Activated CD8-positive, alpha-beta memory T cell treated with anti-CD3 and anti-CD28 coated beads, Interleukin-2, amount 10 ng/mL, durations not matched to agents 7 days and 5 days (primary cell): ENCODE measurements at regions of chr10 and their contacts with region 1.

Region 1: DNA sequence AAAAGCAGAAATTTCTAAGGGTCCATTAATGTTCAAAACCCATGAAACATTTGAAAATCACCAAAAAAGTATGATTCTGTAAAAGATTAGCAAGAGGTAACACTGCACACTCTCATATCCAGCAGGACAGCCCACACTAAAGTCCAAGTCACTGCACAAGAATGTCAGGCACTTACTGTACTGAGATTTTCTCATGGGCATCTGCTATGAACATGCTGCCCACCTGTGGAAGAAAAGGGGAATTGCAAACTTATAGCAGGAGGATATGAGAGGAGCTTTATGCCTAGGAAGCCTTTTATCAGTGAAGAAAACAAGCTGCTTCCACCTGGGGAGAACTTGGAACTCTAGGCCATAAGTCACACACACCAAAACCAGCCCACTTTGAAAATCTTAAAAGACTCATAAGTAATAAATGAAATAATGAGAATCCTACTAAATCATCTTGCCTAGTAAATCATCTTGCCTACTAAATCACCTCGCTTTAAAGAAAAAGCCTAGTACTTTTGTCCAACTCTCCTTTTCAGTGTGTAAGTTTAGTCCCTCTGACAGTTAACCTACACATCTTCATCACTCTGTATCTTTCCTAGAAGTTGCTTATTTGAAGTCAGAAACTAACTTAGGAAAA is 46.1 kb downstream of the ARMH3 start:
- DNase-seq: peak; percentile 59
- ATAC-seq: peak; percentile 89
- H3K4me3 Mint-ChIP-seq: no peak overlapping the region
- H3K27ac Mint-ChIP-seq: no peak overlapping the region
- H3K4me1 Mint-ChIP-seq: no peaks in the 10 kb centered on the region
- H3K27me3 Mint-ChIP-seq: no peaks in the 10 kb centered on the region

Region 2: DNA sequence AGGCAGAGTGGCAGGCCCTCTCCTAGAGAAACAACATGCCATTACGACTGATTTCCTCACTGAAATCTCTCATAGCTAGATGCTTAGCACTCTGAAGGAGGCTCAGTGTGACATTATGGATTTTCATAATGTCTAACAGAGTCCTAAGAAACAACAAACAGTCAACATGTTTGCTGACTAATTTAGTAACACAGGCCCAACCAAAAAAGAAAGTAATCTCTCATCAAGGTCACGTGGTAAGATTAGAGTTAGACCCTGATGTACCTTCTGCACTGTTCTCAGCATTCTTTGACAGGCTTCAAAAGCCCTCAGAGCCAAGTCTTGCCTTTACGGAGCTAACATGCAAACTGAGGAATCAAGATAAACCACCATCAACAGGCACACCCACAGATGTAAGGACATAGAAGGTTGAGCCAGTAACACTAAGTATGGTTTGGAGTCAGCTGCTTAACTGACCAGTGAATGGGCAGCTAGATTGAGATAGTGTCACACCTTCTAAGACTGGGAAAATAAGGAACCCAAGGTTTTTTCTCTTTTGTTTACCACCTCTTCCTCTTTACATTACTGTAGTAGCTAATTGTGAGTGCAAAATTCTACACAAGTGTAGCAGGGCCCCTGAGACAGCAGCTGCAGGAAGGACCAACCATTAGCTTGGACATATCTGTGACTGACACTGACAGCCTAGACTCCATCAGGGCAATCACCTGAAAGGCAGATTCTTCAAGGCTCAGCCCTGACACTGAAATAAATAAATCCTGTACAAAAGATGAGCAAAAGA is 151.0 kb before region 1 on chr10:
- CTCF ChIA-PET with region 1: interaction called, 10 read pairs
- DNase-seq: no peak
- ATAC-seq: peak; percentile 93
- H3K4me3 Mint-ChIP-seq: no peak overlapping the region
- H3K27ac Mint-ChIP-seq: peak overlapping the region; percentile 60
- H3K4me1 Mint-ChIP-seq: peaks cover 24% of the 10 kb centered on the region
- H3K27me3 Mint-ChIP-seq: no peaks in the 10 kb centered on the region

Region 3: DNA sequence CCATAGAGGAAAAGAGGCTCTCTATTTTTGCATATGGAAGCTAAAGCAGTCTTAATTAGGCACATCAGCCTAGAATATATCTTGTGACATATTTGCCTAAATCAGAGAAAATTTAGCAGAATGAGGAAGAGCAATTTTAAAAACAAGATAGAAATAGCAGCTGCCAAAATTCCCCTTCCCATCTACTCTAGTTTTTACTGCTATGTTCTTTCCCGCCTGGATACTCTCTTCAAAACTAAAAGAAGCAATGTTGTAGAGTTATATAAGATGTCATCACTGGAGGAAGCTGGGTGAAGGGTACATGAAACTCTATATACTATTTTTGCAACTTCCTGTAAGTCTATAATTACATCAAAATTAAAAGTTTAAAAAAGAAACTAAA is 41.0 kb before region 1 on chr10:
- CTCF ChIA-PET with region 1: interaction called, 15 read pairs
- DNase-seq: no peak
- ATAC-seq: no peak
- H3K4me3 Mint-ChIP-seq: no peak overlapping the region
- H3K27ac Mint-ChIP-seq: no peak overlapping the region
- H3K4me1 Mint-ChIP-seq: peaks cover 26% of the 10 kb centered on the region
- H3K27me3 Mint-ChIP-seq: no peaks in the 10 kb centered on the region

Region 4: DNA sequence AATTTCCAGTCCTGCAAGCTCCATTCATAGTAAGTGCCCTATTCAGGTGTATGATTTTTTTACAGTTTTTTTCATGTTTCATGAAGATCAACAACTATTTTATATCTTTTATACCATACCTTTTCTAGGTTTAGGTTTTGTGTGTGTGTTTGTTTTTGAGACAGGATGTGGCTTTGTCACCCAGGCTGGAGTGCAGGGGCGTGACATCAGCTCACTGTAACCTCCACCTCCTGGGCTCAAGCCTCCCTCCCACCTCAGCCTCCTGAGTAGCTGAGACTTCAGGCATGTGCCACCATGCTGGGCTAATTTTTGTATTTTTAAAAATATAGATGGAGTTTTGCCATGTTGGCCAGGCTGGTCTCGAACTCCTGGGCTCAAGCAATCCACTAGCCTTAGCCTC is 11.0 kb after region 1 on chr10:
- CTCF ChIA-PET with region 1: interaction called, 21 read pairs
- DNase-seq: peak; percentile 64
- ATAC-seq: peak; percentile 51
- H3K4me3 Mint-ChIP-seq: no peak overlapping the region
- H3K27ac Mint-ChIP-seq: no peak overlapping the region
- H3K4me1 Mint-ChIP-seq: peaks cover 2% of the 10 kb centered on the region
- H3K27me3 Mint-ChIP-seq: no peaks in the 10 kb centered on the region